Psoas muscle (tissue), 8 donors: ENCODE measurements at regions of chr6 and their contacts with region 1.

Region 1: GRCh38 chr6:41591859-41592502 is 45.8 kb downstream of the FOXP4 start:
- DNase-seq: peak; percentile 69 to 83
- ATAC-seq: peak; percentile 70 to 91 (median 85)
- H3K4me3 ChIP-seq: no peak overlapping the region
- H3K27ac ChIP-seq: no peak overlapping the region
- H3K4me1 ChIP-seq: no peaks in the 10 kb centered on the region
- H3K27me3 ChIP-seq: no peaks in the 10 kb centered on the region
- CTCF ChIP-seq: peak; percentile 93

Region 2: DNA sequence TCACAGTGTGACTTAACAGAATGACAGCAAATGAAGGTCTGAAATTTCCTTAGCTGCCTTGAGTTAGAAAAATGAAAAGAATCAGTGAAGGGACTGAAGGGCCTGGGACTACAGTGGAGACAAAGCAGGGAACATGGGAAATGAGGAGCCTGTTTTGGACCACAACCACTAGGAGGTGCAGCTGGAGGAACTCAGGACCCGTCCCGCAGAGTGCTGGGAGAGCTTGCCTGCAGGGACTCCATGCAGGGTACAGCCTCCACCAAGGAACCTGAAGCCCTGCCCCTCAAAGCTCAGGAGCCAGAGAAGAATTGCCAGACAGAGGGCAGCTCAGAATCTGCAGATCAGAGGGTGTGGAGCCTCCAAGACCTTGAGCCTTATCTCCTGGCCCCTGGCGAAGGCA is 1055.5 kb before region 1 on chr6:
- intact Hi-C with region 1: no loop called
- DNase-seq: no peak
- ATAC-seq: no peak
- H3K4me3 ChIP-seq: no peak overlapping the region
- H3K27ac ChIP-seq: no peak overlapping the region
- H3K4me1 ChIP-seq: no peaks in the 10 kb centered on the region
- H3K27me3 ChIP-seq: no peaks in the 10 kb centered on the region
- CTCF ChIP-seq: no peak

Region 3: GRCh38 chr6:40832691-40833090 is 759.3 kb before region 1 on chr6:
- intact Hi-C with region 1: no loop called
- DNase-seq: no peak
- ATAC-seq: peak in 1 of 4 donors; percentile 64
- H3K4me3 ChIP-seq: no peak overlapping the region
- H3K27ac ChIP-seq: no peak overlapping the region
- H3K4me1 ChIP-seq: peaks cover 3% of the 10 kb centered on the region
- H3K27me3 ChIP-seq: no peaks in the 10 kb centered on the region
- CTCF ChIP-seq: no peak

Region 4: DNA sequence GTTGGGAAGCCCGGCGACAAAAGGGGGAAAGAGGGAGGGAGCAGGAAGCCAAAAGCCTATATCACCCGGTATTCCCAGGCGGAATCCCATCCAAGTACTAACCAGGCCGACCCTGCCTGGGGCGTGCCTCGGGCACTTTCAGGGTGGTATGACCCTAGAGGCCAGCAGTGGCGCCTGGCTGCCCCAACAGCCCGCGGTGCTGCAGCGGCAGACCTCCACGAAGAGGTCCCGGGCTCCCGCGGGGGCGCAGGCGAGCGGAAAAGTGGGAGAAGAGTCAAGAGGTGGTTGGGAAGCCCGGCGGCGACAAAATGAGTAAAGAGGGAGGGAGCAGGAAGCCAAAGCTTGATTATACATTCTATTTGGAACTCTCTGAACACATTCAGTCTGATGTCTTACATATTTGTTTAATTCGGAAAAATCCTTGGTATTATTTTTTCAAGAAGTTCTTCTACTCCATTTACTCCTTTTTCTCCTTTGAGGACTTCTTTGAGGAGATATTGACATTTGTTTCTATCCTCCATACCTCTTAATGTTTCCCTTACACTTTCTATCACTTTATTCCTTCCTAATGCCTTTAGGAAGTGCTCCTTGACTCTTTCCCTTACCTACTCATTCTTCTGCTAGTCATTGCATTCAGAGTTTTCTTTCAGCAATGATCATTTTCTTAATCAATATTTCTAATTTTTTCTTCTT is 352.4 kb before region 1 on chr6:
- intact Hi-C with region 1: no loop called
- DNase-seq: no peak
- ATAC-seq: no peak
- H3K4me3 ChIP-seq: no peak overlapping the region
- H3K27ac ChIP-seq: no peak overlapping the region
- H3K4me1 ChIP-seq: no peaks in the 10 kb centered on the region
- H3K27me3 ChIP-seq: peaks cover 6 to 38% (median 6%) of the 10 kb centered on the region in 3 donors
- CTCF ChIP-seq: no peak

Region 5: GRCh38 chr6:41424370-41425058 is 167.5 kb before region 1 on chr6:
- intact Hi-C with region 1: loop called (anchors 1 to 2 kb)
- DNase-seq: peak; percentile 74 to 79
- ATAC-seq: peak; percentile 55 to 75 (median 66)
- H3K4me3 ChIP-seq: no peak overlapping the region
- H3K27ac ChIP-seq: no peak overlapping the region
- H3K4me1 ChIP-seq: peaks cover 6% of the 10 kb centered on the region
- H3K27me3 ChIP-seq: peaks cover 0 to 15% (median 0%) of the 10 kb centered on the region in 3 donors
- CTCF ChIP-seq: peak; percentile 83

Region 6: GRCh38 chr6:41463062-41463930 is 128.7 kb before region 1 on chr6:
- intact Hi-C with region 1: loop called (anchors 1 to 2 kb)
- DNase-seq: peak; percentile 66 to 76
- ATAC-seq: peak; percentile 89 to 95 (median 92)
- H3K4me3 ChIP-seq: no peak overlapping the region
- H3K27ac ChIP-seq: no peak overlapping the region
- H3K4me1 ChIP-seq: peaks cover 3% of the 10 kb centered on the region
- H3K27me3 ChIP-seq: peaks cover 0 to 20% (median 0%) of the 10 kb centered on the region in 3 donors
- CTCF ChIP-seq: peak; percentile 65

Region 7: DNA sequence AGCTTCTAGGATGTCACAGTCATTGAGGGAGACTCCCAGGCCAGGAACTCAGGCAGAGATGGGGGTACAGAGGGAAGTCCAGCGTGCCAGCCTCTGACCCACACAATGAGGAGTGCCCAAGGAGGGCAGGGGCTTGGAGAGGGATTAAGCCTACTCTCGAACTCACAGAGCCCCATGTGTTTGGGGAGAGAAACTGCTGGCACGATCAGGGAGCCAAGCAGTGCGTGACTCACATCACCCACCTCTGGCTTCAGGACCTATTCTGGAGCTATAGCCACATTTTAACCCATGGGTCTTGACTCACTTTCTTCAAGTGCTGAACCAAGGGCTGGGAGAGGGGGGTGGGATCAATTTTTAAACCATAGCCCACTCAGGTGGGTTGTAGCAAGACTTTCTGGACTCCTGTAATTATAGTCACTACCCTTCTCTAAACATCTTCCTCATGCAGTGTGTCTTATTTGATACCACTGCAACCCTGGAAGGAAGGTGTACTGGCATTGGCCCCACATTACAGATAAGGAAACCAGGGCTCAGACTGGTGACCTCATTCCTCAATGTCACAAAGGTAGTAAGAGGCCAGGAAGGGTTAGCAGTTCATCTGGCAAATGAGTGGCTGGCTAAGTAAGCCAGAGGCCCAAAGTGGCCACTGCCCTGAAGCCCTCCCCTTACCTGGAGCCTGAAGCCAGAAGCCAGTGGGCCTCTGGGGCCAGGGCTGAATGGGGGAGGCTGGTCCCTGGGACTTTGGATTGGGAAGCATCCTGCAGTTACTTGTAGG is 33.8 kb before region 1 on chr6:
- intact Hi-C with region 1: no loop called
- DNase-seq: no peak
- ATAC-seq: no peak
- H3K4me3 ChIP-seq: no peak overlapping the region
- H3K27ac ChIP-seq: no peak overlapping the region
- H3K4me1 ChIP-seq: peaks cover 24% of the 10 kb centered on the region
- H3K27me3 ChIP-seq: no peaks in the 10 kb centered on the region
- CTCF ChIP-seq: no peak